Tibial artery (tissue), 4 donors: ENCODE measurements at regions of chr17 and their contacts with region 1.

Region 1: DNA sequence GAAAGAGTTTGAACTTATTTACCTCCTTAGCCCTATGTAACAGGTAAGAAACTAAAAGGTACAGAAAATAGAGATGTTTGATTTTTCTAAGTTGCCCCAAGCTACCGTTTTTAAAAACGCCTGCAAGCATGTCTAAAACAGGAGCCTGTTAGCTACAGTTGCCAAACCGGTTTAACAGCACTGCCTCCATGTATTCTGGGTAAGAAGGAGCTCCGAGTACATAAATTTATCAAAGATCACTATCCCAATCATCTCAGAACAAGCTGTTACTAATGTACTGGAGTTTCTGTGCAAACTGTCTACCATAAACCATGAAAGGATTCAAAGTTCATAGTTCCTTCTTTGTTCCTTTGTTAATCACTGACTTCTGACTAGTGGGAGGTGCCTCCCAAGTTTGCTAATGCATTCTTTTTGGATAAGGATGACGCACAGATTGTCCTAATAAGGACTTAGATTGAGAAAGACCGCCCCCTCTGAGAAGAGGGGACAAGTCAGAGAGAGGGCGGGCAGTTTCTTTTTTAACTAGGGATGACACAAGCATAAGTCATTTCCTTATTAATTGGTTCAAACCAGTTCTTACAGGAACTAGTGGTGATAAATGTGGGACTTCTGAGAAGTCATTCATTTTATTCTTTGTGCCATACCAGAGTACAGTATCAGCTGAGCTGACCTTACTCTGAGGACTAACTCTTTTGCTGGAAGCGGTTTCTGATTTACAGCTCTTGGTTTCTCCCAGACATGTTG is 55.3 kb downstream of the TUBD1 start:
- DNase-seq: peak; percentile 81
- H3K4me3 ChIP-seq: peak overlapping the region; percentile 63
- H3K27ac ChIP-seq: peak overlapping the region; percentile 88 to 89
- H3K4me1 ChIP-seq: peaks cover 4 to 46% (median 11%) of the 10 kb centered on the region in 4 donors
- H3K27me3 ChIP-seq: no peaks in the 10 kb centered on the region
- CTCF ChIP-seq: peak in 1 of 2 experiments; percentile 11

Region 2: GRCh38 chr17:58885402-58886009 is 952.0 kb before region 1 on chr17:
- intact Hi-C with region 1: no loop called
- DNase-seq: no peak
- H3K4me3 ChIP-seq: no peak overlapping the region
- H3K27ac ChIP-seq: no peak overlapping the region
- H3K4me1 ChIP-seq: no peaks in the 10 kb centered on the region
- H3K27me3 ChIP-seq: no peaks in the 10 kb centered on the region
- CTCF ChIP-seq: no peak

Region 3: DNA sequence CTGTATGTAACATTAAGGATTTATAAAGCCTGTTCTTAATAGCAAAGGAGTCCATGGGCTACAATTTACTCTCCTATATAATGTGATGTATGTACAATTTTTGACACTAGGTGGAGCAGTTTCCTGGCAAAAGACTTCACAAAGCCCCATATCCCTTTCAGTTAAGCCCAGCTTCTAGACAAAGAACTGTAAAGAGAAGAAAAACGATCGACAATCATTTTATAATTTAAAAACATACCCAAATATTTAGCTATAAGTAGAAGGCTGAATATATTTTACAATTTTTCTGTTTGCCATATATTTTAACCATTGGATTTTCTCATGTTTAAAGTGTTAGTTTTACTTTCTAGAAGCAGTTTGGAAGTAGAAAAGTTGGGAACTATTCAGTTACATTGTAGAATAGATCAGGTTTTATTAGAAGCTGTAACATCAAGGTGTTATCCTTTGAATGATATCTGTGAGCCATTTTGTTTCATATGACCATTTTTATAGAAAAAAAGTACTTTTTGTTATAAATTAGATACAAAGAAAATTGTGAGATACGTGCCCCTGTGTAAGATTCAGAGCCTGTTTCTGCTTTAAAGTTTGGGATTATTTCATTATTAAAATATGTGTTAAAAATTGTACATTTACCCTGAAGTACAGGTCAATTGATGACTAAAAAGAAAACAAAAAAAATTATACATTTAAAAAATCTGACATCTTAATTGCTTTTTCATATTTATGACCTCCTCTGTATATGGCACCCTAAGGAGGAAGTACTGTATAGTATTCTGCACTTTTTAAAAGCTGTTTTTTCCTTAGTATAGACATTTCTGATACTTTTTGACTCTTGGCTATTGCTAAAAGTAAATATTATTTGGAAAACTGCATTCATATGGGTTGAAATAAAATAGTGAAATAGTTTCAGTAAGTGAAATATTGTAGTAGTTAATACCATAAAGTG is 83.7 kb before region 1 on chr17:
- intact Hi-C with region 1: loop called (anchors 2 kb)
- DNase-seq: no peak
- H3K4me3 ChIP-seq: peak overlapping the region in 1 of 2 donors; percentile 21
- H3K27ac ChIP-seq: peak overlapping the region; percentile 41 to 67
- H3K4me1 ChIP-seq: peaks cover 0 to 43% (median 11%) of the 10 kb centered on the region in 4 donors
- H3K27me3 ChIP-seq: no peaks in the 10 kb centered on the region
- CTCF ChIP-seq: peak; percentile 69 to 88